Caco-2 (cell line): ENCODE measurements at regions of chrX and their contacts with region 1.

Region 1: GRCh38 chrX:52341493-52341892 is 27.3 kb upstream of the XAGE2 start:
- DNase-seq: no peak
- H3K4me3 ChIP-seq: no peak overlapping the region
- H3K4me3 Mint-ChIP-seq: no peak overlapping the region
- H3K27ac Mint-ChIP-seq: no peak overlapping the region
- H3K4me1 ChIP-seq: no peaks in the 10 kb centered on the region
- H3K4me1 Mint-ChIP-seq: peaks cover 6% of the 10 kb centered on the region
- H3K27me3 ChIP-seq: no peaks in the 10 kb centered on the region
- H3K27me3 Mint-ChIP-seq: peaks cover 20% of the 10 kb centered on the region
- CTCF ChIP-seq: no peak

Region 2: GRCh38 chrX:51825436-51825835 is 516.1 kb before region 1 on chrX:
- CTCF ChIA-PET with region 1: no interaction called
- POLR2A ChIA-PET with region 1: no interaction called
- intact Hi-C with region 1: no loop called
- DNase-seq: no peak
- H3K4me3 ChIP-seq: no peak overlapping the region
- H3K4me3 Mint-ChIP-seq: no peak overlapping the region
- H3K27ac Mint-ChIP-seq: peak overlapping the region; percentile 77
- H3K4me1 ChIP-seq: no peaks in the 10 kb centered on the region
- H3K4me1 Mint-ChIP-seq: peaks cover 8% of the 10 kb centered on the region
- H3K27me3 ChIP-seq: no peaks in the 10 kb centered on the region
- H3K27me3 Mint-ChIP-seq: no peaks in the 10 kb centered on the region
- CTCF ChIP-seq: no peak

Region 3: DNA sequence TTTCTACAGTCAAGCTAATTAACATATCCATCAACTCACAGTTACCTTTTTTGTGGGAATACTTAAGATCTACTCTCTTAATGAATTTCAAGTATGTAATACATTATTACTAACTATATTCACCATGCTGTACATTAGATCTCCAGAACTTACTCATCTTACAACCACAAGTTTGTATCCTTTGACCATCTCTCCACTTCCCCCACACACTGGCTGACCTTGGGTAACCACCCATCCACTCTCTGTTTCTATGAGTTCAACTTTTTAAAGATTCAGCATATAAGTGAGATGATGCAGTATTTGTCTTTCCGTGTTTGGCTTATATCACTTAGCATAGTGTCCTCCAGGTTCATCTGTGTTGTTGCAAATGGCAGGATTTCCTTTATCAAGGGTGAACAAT is 478.6 kb before region 1 on chrX:
- CTCF ChIA-PET with region 1: no interaction called
- POLR2A ChIA-PET with region 1: no interaction called
- intact Hi-C with region 1: no loop called
- DNase-seq: no peak
- H3K4me3 ChIP-seq: no peak overlapping the region
- H3K4me3 Mint-ChIP-seq: no peak overlapping the region
- H3K27ac Mint-ChIP-seq: no peak overlapping the region
- H3K4me1 ChIP-seq: no peaks in the 10 kb centered on the region
- H3K4me1 Mint-ChIP-seq: peaks cover 8% of the 10 kb centered on the region
- H3K27me3 ChIP-seq: no peaks in the 10 kb centered on the region
- H3K27me3 Mint-ChIP-seq: no peaks in the 10 kb centered on the region
- CTCF ChIP-seq: no peak

Region 4: GRCh38 chrX:52261463-52262194 is 79.9 kb before region 1 on chrX:
- CTCF ChIA-PET with region 1: no interaction called
- POLR2A ChIA-PET with region 1: no interaction called
- intact Hi-C with region 1: loop called (anchors 2 kb)
- DNase-seq: peak; percentile 86 to 90
- H3K4me3 ChIP-seq: peak overlapping the region; percentile 63
- H3K4me3 Mint-ChIP-seq: peak overlapping the region; percentile 88
- H3K27ac Mint-ChIP-seq: peak overlapping the region; percentile 90
- H3K4me1 ChIP-seq: peaks cover 18% of the 10 kb centered on the region
- H3K4me1 Mint-ChIP-seq: peaks cover 7% of the 10 kb centered on the region
- H3K27me3 ChIP-seq: no peaks in the 10 kb centered on the region
- H3K27me3 Mint-ChIP-seq: peaks cover 3% of the 10 kb centered on the region
- CTCF ChIP-seq: peak; percentile 68 to 87